Left ventricle myocardium superior (tissue), 1 donor: ENCODE measurements at regions of chr2 and their contacts with region 1.

Region 1: DNA sequence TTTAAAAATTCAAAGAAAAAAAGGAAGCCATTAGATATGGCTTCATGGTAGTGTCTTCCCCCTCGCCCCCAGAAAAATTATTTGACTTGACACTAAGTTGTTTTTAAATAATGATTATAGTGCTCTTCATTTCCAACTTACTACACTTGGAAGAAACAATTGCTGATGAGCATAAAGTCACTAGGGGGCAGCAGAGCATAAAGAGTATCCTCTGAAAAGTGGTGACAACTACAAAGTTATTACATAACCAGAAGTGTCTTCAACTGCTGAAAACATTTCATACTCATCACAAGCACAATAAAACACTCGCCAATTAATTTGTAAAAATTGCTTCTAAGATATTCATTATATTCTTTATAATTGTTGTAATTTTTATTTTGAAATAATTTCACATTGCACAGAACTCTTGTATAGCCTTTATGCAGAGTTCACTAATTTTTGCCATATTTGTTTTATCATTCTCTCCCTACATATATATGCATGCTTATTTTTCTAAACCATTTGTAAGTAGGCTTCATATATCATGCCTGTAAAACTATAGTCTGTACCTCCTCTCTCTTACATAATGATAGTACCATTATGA is 54.9 kb downstream of the EXOC6B start:
- DNase-seq: no peak
- ATAC-seq: peak; percentile 72

Region 2: GRCh38 chr2:72475272-72475671 is 295.7 kb before region 1 on chr2:
- intact Hi-C with region 1: no loop called
- DNase-seq: no peak
- ATAC-seq: no peak

Region 3: GRCh38 chr2:72859831-72860262 is 88.9 kb after region 1 on chr2:
- intact Hi-C with region 1: loop called (anchors 2 kb)
- DNase-seq: no peak
- ATAC-seq: peak; percentile 72

Region 4: GRCh38 chr2:73700131-73700611 is 929.2 kb after region 1 on chr2:
- intact Hi-C with region 1: no loop called
- DNase-seq: no peak
- ATAC-seq: peak; percentile 59